IMR-90 (cell line): ENCODE measurements at regions of chr6 and their contacts with region 1.

Region 1: GRCh38 chr6:38493931-38494547 is 145.7 kb downstream of the BTBD9 start:
- DNase-seq: peak; percentile 81
- ATAC-seq: peak; percentile 27; the same call in 1 of the 2 replicates
- H3K4me3 ChIP-seq: no peak overlapping the region
- H3K27ac ChIP-seq: no peak overlapping the region
- H3K4me1 ChIP-seq: no peaks in the 10 kb centered on the region
- H3K27me3 ChIP-seq: no peaks in the 10 kb centered on the region
- CTCF ChIP-seq: peak; percentile 90
- POLR2A ChIP-seq: no peak
- RAD21 ChIP-seq: peak; percentile 96

Region 2: DNA sequence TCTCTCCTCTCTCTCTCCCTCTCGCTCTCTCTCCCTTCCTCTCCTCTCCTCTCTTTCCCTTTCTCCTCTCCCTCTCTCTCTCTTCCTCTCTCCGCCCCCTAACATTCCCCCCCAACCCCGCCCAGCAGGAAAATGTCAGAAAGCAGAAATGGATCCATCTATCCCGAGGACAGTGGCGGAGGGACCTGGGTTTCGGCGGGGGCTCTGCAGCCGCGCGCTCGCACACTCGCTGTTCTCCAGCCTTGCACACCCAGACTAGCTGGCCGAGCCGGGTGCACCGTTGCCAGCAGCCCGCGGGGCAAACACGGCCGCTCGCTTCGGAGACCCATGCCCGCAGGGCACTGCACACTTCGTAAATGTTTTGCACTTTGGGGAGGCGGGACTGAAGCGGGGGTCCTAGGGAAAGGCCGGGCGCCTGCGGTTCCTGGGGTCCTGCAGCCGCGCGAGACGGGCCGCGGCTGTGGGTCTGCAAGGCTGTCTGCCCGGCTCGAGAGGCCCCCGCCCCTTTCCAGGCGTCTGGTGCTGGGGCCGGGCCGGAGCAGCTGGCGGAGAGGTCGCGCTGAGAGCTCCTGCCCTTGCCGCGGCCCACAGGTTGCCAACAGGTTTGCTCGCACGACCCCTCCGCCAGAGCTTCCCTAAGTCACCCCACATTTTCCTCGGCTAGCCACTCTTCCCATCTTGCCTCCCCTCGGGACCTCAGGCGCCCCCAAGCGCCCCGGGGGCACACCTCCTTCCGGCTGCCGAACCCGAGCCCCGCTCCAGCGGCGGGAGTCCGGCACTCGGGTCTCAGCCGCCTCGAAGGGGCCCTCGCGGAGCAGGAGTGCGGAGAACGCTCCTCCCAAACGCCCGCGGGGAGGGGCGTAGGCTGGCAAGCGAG is 795.5 kb before region 1 on chr6:
- CTCF ChIA-PET with region 1: interaction called, 3 read pairs
- POLR2A ChIA-PET with region 1: no interaction called
- dilution Hi-C with region 1: no loop called
- in situ Hi-C with region 1: no loop called
- intact Hi-C with region 1: loop called (anchors 1 kb)
- DNase-seq: peak; percentile 31
- ATAC-seq: peak; percentile 19
- H3K4me3 ChIP-seq: peak overlapping the region; percentile 56
- H3K27ac ChIP-seq: no peak overlapping the region; the same call in 1 of the 2 replicates
- H3K4me1 ChIP-seq: peaks cover 12% of the 10 kb centered on the region
- H3K27me3 ChIP-seq: peaks cover 8% of the 10 kb centered on the region; the same call in 1 of the 2 replicates
- CTCF ChIP-seq: no peak
- POLR2A ChIP-seq: no peak
- RAD21 ChIP-seq: no peak

Region 3: GRCh38 chr6:37791156-37791919 is 702.7 kb before region 1 on chr6:
- CTCF ChIA-PET with region 1: interaction called, 3 read pairs
- POLR2A ChIA-PET with region 1: no interaction called
- dilution Hi-C with region 1: no loop called
- in situ Hi-C with region 1: no loop called
- intact Hi-C with region 1: loop called (anchors 5 kb)
- DNase-seq: peak; percentile 98
- ATAC-seq: peak; percentile 97
- H3K4me3 ChIP-seq: no peak overlapping the region
- H3K27ac ChIP-seq: no peak overlapping the region
- H3K4me1 ChIP-seq: peaks cover 9% of the 10 kb centered on the region; the same call in 1 of the 2 replicates
- H3K27me3 ChIP-seq: no peaks in the 10 kb centered on the region
- CTCF ChIP-seq: peak; percentile 96
- POLR2A ChIP-seq: no peak
- RAD21 ChIP-seq: peak; percentile 94

Region 4: GRCh38 chr6:38155144-38155543 is 338.9 kb before region 1 on chr6:
- CTCF ChIA-PET with region 1: no interaction called
- POLR2A ChIA-PET with region 1: no interaction called
- dilution Hi-C with region 1: no loop called
- in situ Hi-C with region 1: no loop called
- intact Hi-C with region 1: loop called (anchors 5 kb)
- DNase-seq: peak; percentile 35
- ATAC-seq: no peak
- H3K4me3 ChIP-seq: no peak overlapping the region
- H3K27ac ChIP-seq: peak overlapping the region; percentile 54
- H3K4me1 ChIP-seq: peaks cover 18% of the 10 kb centered on the region
- H3K27me3 ChIP-seq: no peaks in the 10 kb centered on the region
- CTCF ChIP-seq: no peak
- POLR2A ChIP-seq: no peak
- RAD21 ChIP-seq: no peak